CD4-positive, alpha-beta T cell (primary cell): ENCODE measurements at regions of chr6 and their contacts with region 1.

Region 1: GRCh38 chr6:30907758-30908591 is at the start of gene GTF2H4:
- DNase-seq: peak; percentile 90 to 97 (median 94)
- ATAC-seq: peak; percentile 99
- H3K4me3 ChIP-seq: peak within 1 kb of the TSS; percentile 81
- H3K4me3 Mint-ChIP-seq: peak within 1 kb of the TSS; percentile 98
- H3K27ac ChIP-seq: no peak within 1 kb of the TSS
- H3K27ac Mint-ChIP-seq: peak within 1 kb of the TSS; percentile 71
- H3K4me1 ChIP-seq: peaks cover 15% of the 10 kb centered on the region
- H3K4me1 Mint-ChIP-seq: peaks cover 16% of the 10 kb centered on the region
- H3K27me3 ChIP-seq: no peaks in the 10 kb centered on the region
- H3K27me3 Mint-ChIP-seq: no peaks in the 10 kb centered on the region
- CTCF ChIP-seq: no peak
- total RNA-seq, gene GTF2H4: 7.7 to 10.7 TPM

Region 2: GRCh38 chr6:30883685-30884520 is 24.1 kb before region 1 on chr6 and contains the start of gene DDR1:
- CTCF ChIA-PET with region 1: no interaction called
- POLR2A ChIA-PET with region 1: interaction called, 5 read pairs
- intact Hi-C with region 1: loop called in 1 of 2 experiments (anchors 2 kb)
- DNase-seq: peak in 12 of 14 experiments; percentile 19 to 76 (median 46)
- ATAC-seq: peak; percentile 59
- H3K4me3 ChIP-seq: peak within 1 kb of the TSS; percentile 62
- H3K4me3 Mint-ChIP-seq: peak within 1 kb of the TSS; percentile 89
- H3K27ac ChIP-seq: peak within 1 kb of the TSS in 1 of 2 donors; percentile 29
- H3K27ac Mint-ChIP-seq: peak within 1 kb of the TSS; percentile 66
- H3K4me1 ChIP-seq: peaks cover 35% of the 10 kb centered on the region
- H3K4me1 Mint-ChIP-seq: peaks cover 33% of the 10 kb centered on the region
- H3K27me3 ChIP-seq: no peaks in the 10 kb centered on the region
- H3K27me3 Mint-ChIP-seq: no peaks in the 10 kb centered on the region
- CTCF ChIP-seq: no peak
- total RNA-seq, gene DDR1: 6.5 to 6.6 TPM